ENCODE measurements at regions of chr6 and their contacts with region 1.

Region 1: GRCh38 chr6:35731736-35732532 is 4.9 kb upstream of the ARMC12 start:
- DNase-seq: peak; percentile 98
- ATAC-seq: peak; percentile 40 to 42
- H3K4me3 ChIP-seq: peak overlapping the region; percentile 70 to 94 (median 82)
- H3K27ac ChIP-seq: peak overlapping the region; percentile 99 to 100 (median 100)
- H3K4me1 ChIP-seq: peaks cover 62 to 69% of the 10 kb centered on the region in 2 donors
- H3K27me3 ChIP-seq: no peaks in the 10 kb centered on the region
- CTCF ChIP-seq: no peak
- POLR2A ChIP-seq: no peak

Region 2: GRCh38 chr6:33744001-33744848 is 1987.7 kb before region 1 on chr6:
- in situ Hi-C with region 1: no loop called
- intact Hi-C with region 1: loop called (anchors 5 kb)
- DNase-seq: peak; percentile 89 to 96
- ATAC-seq: peak; percentile 28 to 35
- H3K4me3 ChIP-seq: peak overlapping the region; percentile 66 to 88 (median 79)
- H3K27ac ChIP-seq: peak overlapping the region; percentile 98 to 100 (median 100)
- H3K4me1 ChIP-seq: peaks cover 15 to 32% of the 10 kb centered on the region in 2 donors
- H3K27me3 ChIP-seq: no peaks in the 10 kb centered on the region
- CTCF ChIP-seq: peak; percentile 91 to 98 (median 98)
- POLR2A ChIP-seq: peak in 1 of 2 donors; percentile 78

Region 3: DNA sequence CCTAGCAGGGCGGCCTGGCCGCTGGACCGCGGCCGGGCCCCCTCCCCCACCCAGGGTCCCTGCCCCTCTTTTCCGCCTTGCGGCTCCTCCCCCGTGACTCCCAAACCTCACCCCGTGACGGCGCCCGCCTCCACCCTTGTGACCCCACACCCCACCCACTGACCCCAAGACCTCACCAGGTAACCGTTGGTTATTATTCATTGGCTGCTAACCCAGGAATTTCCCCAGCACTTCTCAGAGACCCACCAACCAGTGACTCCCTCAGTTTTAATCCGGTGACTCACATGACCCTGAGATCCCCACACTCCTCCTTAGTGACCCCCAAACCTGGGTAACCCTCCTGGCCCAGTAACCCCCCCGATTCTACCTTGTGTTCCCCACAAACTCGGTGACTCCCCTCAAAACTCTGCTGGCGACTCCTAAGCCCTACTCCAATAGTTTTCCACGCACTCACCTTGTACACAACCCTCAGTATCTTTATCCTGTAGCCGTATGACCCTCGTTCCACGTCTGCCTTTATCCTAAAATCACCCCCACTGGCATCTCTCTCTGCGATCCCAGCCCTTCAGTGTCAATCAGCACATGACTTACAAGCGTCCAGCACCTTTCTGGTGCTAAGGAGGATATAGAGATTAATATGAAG is 471.9 kb before region 1 on chr6:
- in situ Hi-C with region 1: no loop called
- intact Hi-C with region 1: loop called (anchors 10 kb)
- DNase-seq: peak; percentile 55 to 70
- ATAC-seq: peak; percentile 32 to 34
- H3K4me3 ChIP-seq: peak overlapping the region; percentile 74 to 90 (median 86)
- H3K27ac ChIP-seq: peak overlapping the region; percentile 93 to 99 (median 96)
- H3K4me1 ChIP-seq: peaks cover 35 to 53% of the 10 kb centered on the region in 2 donors
- H3K27me3 ChIP-seq: no peaks in the 10 kb centered on the region
- CTCF ChIP-seq: no peak
- POLR2A ChIP-seq: no peak

Region 4: DNA sequence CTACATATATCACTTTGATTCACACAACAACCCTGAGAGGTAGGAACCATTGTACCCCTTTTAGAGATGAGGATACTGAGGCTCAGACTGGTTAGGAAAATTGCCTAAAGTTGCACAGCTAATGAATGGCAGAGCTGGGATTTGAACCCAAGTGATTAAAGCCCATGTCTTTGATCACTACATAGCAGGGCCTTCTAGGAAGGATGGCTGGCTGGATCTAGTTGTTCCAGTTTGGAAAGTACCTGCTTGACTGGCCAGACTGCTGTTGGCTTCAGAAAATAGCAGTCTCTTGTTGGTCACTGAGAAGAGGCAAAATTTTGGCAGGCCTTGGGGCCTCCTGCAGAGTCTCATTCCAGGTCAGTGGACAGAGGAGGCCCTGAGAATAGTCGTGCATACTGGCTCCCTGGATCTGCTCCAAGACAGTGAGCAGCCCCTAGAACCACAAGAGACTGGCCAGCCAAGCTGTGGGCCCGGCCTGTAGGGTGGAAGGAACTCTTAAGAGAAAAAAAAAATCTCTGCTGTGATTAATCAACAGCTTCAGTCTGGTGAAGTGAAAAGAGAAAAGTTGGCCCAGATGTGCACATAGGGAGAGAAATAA is 372.1 kb before region 1 on chr6:
- in situ Hi-C with region 1: no loop called
- intact Hi-C with region 1: loop called (anchors 5 kb)
- DNase-seq: peak in 1 of 2 donors; percentile 59
- ATAC-seq: peak; percentile 4 to 6
- H3K4me3 ChIP-seq: no peak overlapping the region
- H3K27ac ChIP-seq: peak overlapping the region; percentile 85 to 93 (median 86)
- H3K4me1 ChIP-seq: peaks cover 81 to 84% of the 10 kb centered on the region in 2 donors
- H3K27me3 ChIP-seq: no peaks in the 10 kb centered on the region
- CTCF ChIP-seq: no peak
- POLR2A ChIP-seq: no peak

Region 5: DNA sequence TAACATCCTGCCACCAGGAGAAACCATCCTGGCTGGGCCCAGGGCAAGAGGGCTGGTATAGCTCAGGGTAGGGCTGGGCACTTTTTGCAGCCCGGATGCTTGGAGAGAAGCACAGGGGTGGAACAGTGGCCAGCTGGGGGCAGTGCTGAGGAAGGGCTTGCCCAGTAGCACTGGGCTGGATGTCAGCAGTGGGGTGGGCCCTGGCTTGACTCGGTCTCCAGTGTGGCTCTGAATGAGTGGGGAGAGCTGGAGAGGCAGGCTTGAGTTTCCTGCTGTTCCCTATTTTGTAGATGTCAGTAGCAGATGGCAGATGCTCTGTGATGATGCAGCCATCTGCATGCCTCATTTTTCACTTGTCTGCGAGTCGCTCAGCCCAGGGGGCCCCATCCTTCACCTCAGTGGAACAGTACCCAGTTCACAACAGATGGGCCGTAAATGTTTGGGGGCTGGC is 162.9 kb before region 1 on chr6:
- in situ Hi-C with region 1: no loop called
- intact Hi-C with region 1: loop called (anchors 1 kb)
- DNase-seq: peak; percentile 70 to 87
- ATAC-seq: peak; percentile 14 to 24
- H3K4me3 ChIP-seq: no peak overlapping the region
- H3K27ac ChIP-seq: peak overlapping the region; percentile 42 to 76 (median 66)
- H3K4me1 ChIP-seq: no peaks in the 10 kb centered on the region
- H3K27me3 ChIP-seq: no peaks in the 10 kb centered on the region
- CTCF ChIP-seq: peak; percentile 53 to 67 (median 66)
- POLR2A ChIP-seq: peak in 1 of 2 donors; percentile 18

Region 6: GRCh38 chr6:35590622-35591066 is 141.3 kb before region 1 on chr6:
- in situ Hi-C with region 1: loop called in 3 of 4 experiments (anchors 5 to 10 kb)
- intact Hi-C with region 1: loop called (anchors 2 kb)
- DNase-seq: peak; percentile 80 to 85
- ATAC-seq: peak; percentile 63 to 70
- H3K4me3 ChIP-seq: no peak overlapping the region
- H3K27ac ChIP-seq: peak overlapping the region; percentile 89 to 99 (median 92)
- H3K4me1 ChIP-seq: peaks cover 89 to 97% of the 10 kb centered on the region in 2 donors
- H3K27me3 ChIP-seq: no peaks in the 10 kb centered on the region
- CTCF ChIP-seq: no peak
- POLR2A ChIP-seq: peak; percentile 36 to 73

Region 7: GRCh38 chr6:35688581-35689322 is 43.2 kb before region 1 on chr6 and contains the start of gene FKBP5:
- in situ Hi-C with region 1: loop called in 2 of 4 experiments (anchors 5 kb)
- intact Hi-C with region 1: loop called (anchors 1 kb)
- DNase-seq: peak; percentile 98
- ATAC-seq: peak; percentile 54 to 57
- H3K4me3 ChIP-seq: peak within 1 kb of the TSS; percentile 79 to 88 (median 84)
- H3K27ac ChIP-seq: peak within 1 kb of the TSS; percentile 96 to 98 (median 97)
- H3K4me1 ChIP-seq: peaks cover 38 to 41% of the 10 kb centered on the region in 2 donors
- H3K27me3 ChIP-seq: no peaks in the 10 kb centered on the region
- CTCF ChIP-seq: peak in 1 of 5 experiments; percentile 21
- POLR2A ChIP-seq: peak; percentile 100
- total RNA-seq, gene FKBP5: 665 to 1,753 (median 1,205) TPM

Measured in gastrocnemius medialis (tissue), 4 donors.